ENCODE measurements at regions of chr20 and their contacts with region 1.

Region 1: DNA sequence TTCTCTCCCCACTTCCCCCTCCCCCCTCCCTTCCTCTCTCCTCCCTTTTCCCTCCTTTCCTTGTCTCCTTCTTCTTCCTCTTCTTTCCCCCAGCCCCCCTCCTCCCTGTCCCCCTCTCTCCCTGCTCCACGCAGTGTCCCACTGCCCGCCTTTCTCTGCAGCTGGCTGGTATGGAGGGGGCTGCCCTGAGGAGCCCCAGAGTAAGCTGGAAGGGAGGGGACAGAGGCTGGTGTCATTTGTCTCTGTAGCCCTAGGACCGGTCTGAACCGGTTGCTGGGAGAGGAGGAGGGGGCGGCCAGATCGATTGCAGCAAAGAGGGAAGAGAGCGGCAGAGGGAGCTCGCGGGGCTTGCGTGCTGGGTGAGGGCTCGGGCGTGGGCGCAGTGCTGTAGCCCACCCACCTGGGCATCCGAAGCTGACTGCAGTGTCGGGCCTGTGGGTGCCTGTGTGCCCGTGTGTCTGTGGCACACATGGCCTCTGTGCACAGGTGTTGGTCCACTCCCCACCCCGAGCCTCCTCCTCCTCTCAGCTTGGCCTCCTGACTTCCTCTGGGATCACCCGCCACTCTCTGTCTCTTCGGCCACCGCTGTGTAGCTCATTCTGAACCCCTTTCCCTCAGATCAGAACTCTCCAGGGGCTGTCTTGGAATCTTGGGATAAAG is 50.6 kb downstream of the SRC start:
- DNase-seq: no peak
- H3K4me3 ChIP-seq: no peak overlapping the region
- H3K27ac ChIP-seq: no peak overlapping the region
- H3K4me1 ChIP-seq: peaks cover 12 to 29% of the 10 kb centered on the region in 2 donors
- H3K27me3 ChIP-seq: no peaks in the 10 kb centered on the region
- CTCF ChIP-seq: no peak

Region 2: DNA sequence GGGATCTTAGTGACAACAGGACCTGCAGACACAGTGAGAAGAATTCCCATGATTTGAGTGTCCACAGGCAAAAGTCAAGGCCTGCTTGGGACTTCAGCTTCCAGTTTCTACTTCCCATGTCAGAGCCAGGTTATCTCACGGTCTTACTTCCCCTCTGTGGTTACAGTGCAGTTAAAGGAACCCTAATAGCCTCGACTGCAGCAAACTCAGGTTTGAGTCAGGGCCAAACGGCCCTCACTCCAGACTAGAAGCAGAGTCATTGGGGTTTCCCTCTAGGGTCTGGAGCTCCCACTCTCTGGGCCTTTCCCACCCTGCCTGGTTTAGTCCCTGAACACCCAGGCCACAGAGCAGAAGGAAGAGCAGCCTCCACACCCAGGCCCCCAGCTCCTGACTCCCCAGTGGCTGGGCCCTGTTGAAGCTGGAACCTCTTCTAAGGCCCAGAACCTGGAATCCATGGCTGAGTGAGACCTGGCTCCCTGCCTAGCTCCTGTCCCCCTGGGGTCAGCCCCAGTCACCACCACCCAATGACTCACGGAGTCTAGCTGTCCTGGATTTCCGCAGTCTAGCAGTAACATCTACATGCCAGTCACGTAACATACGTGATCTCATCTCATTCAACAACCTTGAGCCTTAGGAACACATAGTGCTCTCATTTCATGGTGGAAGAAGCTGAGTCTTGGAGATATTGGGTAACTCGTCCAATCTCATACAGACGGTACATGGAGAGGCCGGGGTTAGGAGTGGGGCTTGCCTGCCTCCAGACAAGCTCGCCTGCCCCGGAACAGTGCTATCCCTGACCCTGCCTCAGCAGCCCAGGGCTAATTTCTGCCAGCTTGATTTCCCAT is 125.7 kb before region 1 on chr20:
- intact Hi-C with region 1: no loop called
- DNase-seq: no peak
- H3K4me3 ChIP-seq: no peak overlapping the region
- H3K27ac ChIP-seq: no peak overlapping the region
- H3K4me1 ChIP-seq: no peaks in the 10 kb centered on the region
- H3K27me3 ChIP-seq: no peaks in the 10 kb centered on the region
- CTCF ChIP-seq: no peak

Region 3: DNA sequence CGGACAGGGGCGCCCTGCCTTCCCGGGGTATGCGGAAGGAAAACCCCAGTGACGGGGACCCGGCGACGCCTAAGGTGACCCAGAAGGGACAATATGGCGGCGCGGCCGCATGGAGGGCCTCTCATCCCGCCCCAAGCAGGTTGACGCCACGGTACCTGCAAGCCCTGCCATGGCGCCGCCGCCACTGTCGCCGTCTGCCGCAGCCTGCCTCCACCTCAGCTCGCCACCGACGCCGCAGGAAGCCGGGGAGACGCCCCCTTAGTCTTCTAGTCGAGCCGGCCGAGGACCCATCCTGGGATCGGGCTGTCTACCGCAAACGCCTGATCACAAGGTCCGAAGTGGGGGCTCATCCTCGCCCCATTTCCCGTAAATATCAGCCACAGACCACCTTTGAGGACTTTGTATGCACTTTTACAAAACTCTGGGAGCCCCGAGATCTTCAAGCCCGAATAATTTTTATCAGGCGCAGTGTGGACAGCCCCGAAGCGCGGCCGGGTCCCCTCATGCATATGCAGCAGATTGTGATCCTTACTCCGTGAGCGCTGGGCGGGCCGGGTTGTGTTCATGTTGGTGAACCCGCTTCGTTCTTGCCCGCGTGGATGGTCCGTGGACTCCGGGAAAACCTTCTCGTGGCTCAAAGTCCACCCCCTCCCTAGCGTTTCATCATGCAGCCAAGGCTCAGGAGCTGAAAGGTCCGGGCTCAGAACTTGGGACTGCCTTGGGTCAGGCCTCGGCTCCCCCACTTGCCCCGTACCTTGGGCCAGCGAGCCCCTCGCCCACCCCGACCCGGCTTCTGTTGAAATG is 131.3 kb after region 1 on chr20 and contains the start of gene BLCAP:
- intact Hi-C with region 1: loop called (anchors 5 kb)
- DNase-seq: peak; percentile 59 to 94
- H3K4me3 ChIP-seq: peak within 1 kb of the TSS; percentile 96
- H3K27ac ChIP-seq: peak within 1 kb of the TSS; percentile 86 to 97
- H3K4me1 ChIP-seq: peaks cover 0 to 9% of the 10 kb centered on the region in 2 donors
- H3K27me3 ChIP-seq: no peaks in the 10 kb centered on the region
- CTCF ChIP-seq: no peak
- total RNA-seq, gene BLCAP: 43.9 TPM